ENCODE measurements at regions of chr10 and their contacts with region 1.

Region 1: DNA sequence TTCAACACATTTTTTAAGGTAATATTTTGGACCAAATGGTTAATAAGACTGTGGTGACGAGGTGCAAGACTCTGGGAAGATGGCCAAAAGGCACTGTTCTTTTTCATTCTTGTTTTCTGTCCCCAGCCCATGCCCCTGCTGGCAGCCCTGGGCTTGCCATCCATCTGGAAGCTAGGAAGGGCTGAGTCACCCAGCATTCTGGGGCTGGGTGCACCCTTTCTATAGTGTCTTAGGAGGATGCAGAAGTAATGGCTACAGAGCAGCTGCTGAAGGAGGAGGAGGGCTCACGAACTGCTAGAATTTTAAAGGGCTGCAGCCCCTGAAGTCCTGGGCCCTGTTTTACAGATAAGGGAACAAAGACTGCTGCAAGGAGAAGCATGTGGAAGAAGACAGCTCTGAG is 42.8 kb upstream of the ZNF32 start:
- H3K4me3 ChIP-seq: no peak overlapping the region
- H3K27ac ChIP-seq: no peak overlapping the region
- H3K4me1 ChIP-seq: no peaks in the 10 kb centered on the region
- CTCF ChIP-seq: no peak

Region 2: DNA sequence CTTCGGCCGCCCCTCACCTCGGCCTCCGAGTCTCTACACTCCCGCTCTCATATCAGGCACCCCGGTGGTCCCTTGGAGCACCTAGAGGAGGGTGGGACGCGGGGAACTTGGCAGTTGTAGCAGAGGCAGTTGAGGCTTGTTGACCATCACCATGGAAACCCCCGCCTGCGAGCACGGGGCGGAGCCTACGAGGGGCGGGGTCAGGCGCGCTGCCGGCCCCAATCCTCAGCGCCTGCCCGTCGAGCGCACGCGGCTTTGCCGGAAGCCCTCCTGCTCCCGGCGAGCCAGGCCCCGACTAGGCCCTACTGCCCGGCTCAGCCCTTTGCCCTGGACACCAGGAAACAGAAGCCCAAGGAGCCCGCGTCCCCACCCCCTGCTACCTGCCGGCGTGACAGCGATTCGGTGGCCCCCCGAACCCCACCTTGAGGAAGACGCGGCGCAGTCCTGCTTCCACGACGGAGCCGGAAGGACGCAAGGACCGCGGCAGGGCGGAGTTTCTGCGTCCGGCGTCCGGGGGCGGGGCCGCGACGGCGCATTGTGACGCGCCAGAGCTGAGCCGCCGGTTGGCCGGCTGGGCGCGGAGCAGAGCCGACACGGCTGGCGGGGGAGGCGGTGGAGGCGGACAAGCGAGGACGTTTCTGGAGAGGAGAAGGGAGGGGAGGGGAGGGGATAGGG is 282.6 kb before region 1 on chr10 and contains the start of gene HNRNPF:
- CTCF ChIA-PET with region 1: no interaction called
- POLR2A ChIA-PET with region 1: no interaction called
- H3K4me3 ChIP-seq: peak within 1 kb of the TSS; percentile 74
- H3K27ac ChIP-seq: peak within 1 kb of the TSS; percentile 96
- H3K4me1 ChIP-seq: 0 out of 2 replicates have a peak, but pooled peaks cover 6% of the 10 kb centered on the region
- CTCF ChIP-seq: no peak

Region 3: GRCh38 chr10:43731486-43731885 is 40.0 kb after region 1 on chr10:
- CTCF ChIA-PET with region 1: interaction called, 10 read pairs
- POLR2A ChIA-PET with region 1: no interaction called
- H3K4me3 ChIP-seq: no peak overlapping the region
- H3K27ac ChIP-seq: no peak overlapping the region
- H3K4me1 ChIP-seq: no peaks in the 10 kb centered on the region
- CTCF ChIP-seq: no peak

Measured in HEK293 (cell line).